ENCODE measurements at regions of chr18 and their contacts with region 1.

Region 1: DNA sequence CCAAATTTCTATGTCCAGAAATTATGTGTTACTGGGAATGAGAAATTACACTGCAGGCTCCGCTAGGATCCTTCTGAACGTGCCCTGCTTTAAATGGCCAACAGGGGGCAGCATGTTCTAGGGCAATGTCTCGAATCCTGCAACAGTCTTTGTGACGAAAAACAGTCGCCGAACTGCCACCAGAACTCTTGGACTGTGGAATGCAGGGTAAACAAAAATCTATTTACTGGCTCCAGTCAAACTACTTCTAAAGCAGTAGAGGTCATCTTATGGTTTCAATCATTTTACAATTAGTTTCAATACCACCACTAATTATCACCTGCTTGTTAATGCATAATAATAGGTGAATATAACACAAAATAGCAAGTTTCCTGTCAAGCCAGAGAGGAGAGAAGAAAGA is 9.8 kb upstream of the ZNF397 start:
- DNase-seq: peak; percentile 73 to 87 (median 77)
- ATAC-seq: peak; percentile 100
- H3K4me3 ChIP-seq: no peak overlapping the region
- H3K27ac ChIP-seq: peak overlapping the region in 1 of 3 donors; percentile 3
- H3K4me1 ChIP-seq: peaks cover 0 to 3% (median 0%) of the 10 kb centered on the region in 4 donors
- H3K27me3 ChIP-seq: no peaks in the 10 kb centered on the region
- CTCF ChIP-seq: peak; percentile 87 to 99 (median 96)
- POLR2A ChIP-seq: no peak

Region 2: GRCh38 chr18:35352778-35353177 is 121.7 kb after region 1 on chr18:
- intact Hi-C with region 1: loop called in 1 of 2 experiments (anchors 5 kb)
- DNase-seq: no peak
- ATAC-seq: no peak
- H3K4me3 ChIP-seq: no peak overlapping the region
- H3K27ac ChIP-seq: no peak overlapping the region
- H3K4me1 ChIP-seq: no peaks in the 10 kb centered on the region
- H3K27me3 ChIP-seq: no peaks in the 10 kb centered on the region
- CTCF ChIP-seq: no peak
- POLR2A ChIP-seq: no peak